CD14-positive monocyte (primary cell): ENCODE measurements at regions of chr5 and their contacts with region 1.

Region 1: DNA sequence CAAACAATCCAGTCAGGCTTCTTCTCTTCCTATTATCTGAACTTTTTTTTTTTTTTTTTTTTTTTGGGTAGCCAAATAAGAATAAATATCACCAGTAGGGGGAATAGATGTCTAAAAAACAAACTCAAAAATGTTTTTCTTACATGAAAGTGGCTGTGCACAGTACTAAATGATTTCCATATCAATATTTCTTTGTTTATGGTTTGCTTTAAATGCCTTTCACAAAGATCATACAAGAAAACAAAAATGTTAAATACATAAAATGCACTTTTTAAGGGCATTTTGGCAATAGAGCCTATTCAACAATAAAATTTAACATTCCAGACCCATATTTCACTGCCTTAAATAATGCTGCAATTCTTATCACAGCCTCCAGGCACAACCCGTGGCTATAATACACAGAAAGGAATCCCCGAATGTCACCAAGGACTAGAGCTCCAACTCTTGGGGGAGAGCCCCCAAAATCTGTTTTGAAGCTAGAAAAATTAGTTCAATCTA is 91.1 kb upstream of the TBCA start:
- DNase-seq: peak in 1 of 3 donors; percentile 21
- H3K4me3 ChIP-seq: no peak overlapping the region
- H3K4me3 Mint-ChIP-seq: no peak overlapping the region
- H3K27ac ChIP-seq: no peak overlapping the region
- H3K27ac Mint-ChIP-seq: peak overlapping the region in 1 of 7 donors; percentile 36
- H3K4me1 ChIP-seq: peaks cover 29 to 49% of the 10 kb centered on the region in 2 donors
- H3K4me1 Mint-ChIP-seq: peaks cover 45% of the 10 kb centered on the region
- H3K27me3 ChIP-seq: no peaks in the 10 kb centered on the region
- H3K27me3 Mint-ChIP-seq: no peaks in the 10 kb centered on the region
- CTCF ChIP-seq: peak; percentile 63

Region 2: GRCh38 chr5:77230721-77231470 is 636.3 kb before region 1 on chr5:
- intact Hi-C with region 1: no loop called
- DNase-seq: peak; percentile 33 to 55 (median 51)
- H3K4me3 ChIP-seq: peak overlapping the region in 2 of 3 experiments; percentile 23 to 48
- H3K4me3 Mint-ChIP-seq: peak overlapping the region; percentile 48 to 81
- H3K27ac ChIP-seq: peak overlapping the region; percentile 77 to 86
- H3K27ac Mint-ChIP-seq: peak overlapping the region; percentile 89 to 95 (median 92)
- H3K4me1 ChIP-seq: peaks cover 32 to 40% of the 10 kb centered on the region in 2 donors
- H3K4me1 Mint-ChIP-seq: peaks cover 35% of the 10 kb centered on the region
- H3K27me3 ChIP-seq: peaks cover 0 to 2% of the 10 kb centered on the region in 2 donors
- H3K27me3 Mint-ChIP-seq: peaks cover 0 to 2% (median 0%) of the 10 kb centered on the region in 3 donors
- CTCF ChIP-seq: peak; percentile 46

Region 3: DNA sequence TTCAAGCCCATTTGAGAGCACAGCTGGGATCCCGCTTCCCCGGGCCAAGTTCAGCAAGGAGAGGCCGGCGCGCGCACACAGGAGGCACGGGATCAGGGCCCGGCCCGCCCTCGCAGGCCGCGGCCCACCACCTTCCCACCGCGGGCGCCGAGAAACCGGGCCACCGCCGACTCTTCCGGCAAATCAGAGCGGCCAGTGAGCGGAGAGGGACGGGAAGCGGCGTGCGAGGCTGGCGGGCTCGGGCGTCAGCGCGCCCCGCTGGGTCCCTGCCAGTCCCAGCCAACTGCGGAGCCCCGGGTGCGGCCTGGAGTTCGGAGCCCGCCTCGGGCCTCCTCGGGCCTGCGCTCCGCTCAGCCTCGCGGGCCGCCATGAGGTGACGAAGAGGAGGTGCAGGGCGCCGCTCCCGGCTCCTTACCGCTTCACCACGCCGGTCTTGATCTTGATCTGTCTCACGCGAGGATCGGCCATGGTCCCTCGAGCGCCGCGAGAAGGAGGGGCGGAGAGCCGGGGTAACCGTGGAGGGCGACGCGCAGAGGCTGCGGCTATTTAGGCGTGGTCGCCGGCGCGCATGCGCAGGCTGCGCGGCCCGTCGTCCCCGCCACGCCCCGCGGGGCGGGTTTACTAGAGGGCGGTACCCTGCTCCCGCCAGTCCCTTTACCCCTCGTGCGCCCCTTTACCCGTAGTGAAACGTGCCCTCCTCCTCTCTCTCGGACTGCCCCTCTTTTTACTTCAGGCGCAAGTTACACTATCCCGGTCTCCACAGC is 91.3 kb before region 1 on chr5 and contains the start of gene TBCA:
- intact Hi-C with region 1: loop called (anchors 5 to 10 kb)
- DNase-seq: peak; percentile 85 to 88 (median 85)
- H3K4me3 ChIP-seq: peak within 1 kb of the TSS; percentile 76 to 91 (median 80)
- H3K4me3 Mint-ChIP-seq: peak within 1 kb of the TSS; percentile 96
- H3K27ac ChIP-seq: peak within 1 kb of the TSS; percentile 90 to 96
- H3K27ac Mint-ChIP-seq: peak within 1 kb of the TSS; percentile 94 to 99 (median 97)
- H3K4me1 ChIP-seq: peaks cover 24 to 37% of the 10 kb centered on the region in 2 donors
- H3K4me1 Mint-ChIP-seq: peaks cover 35% of the 10 kb centered on the region
- H3K27me3 ChIP-seq: no peaks in the 10 kb centered on the region
- H3K27me3 Mint-ChIP-seq: peaks cover 0 to 2% (median 0%) of the 10 kb centered on the region in 3 donors
- CTCF ChIP-seq: peak; percentile 22
- polyA plus RNA-seq, gene TBCA: 56.0 to 150 (median 141) TPM